ENCODE measurements at regions of chr18 and their contacts with region 1.

Region 1: DNA sequence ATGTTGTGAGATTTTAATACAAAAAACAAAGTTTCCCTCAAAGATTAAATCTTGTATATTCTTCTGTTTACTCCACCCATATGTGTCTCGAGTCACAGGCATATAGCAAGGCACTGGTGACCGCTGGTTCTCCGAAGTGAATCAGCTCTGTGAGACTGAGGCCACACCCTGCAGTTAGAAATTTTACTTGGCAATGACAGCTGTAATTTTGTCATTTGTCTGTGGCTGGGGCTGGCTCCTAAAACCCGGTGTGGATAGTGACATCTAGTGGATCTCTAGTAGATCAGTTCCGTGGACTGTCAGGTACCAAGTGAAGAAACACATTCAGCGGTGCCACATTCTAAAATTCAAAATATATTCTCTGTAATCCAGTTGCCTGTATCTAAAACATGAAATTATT is 278.0 kb downstream of the NEDD4L start:
- DNase-seq: peak; percentile 85
- H3K4me3 Mint-ChIP-seq: no peak overlapping the region
- H3K27ac Mint-ChIP-seq: no peak overlapping the region
- H3K4me1 Mint-ChIP-seq: peaks cover 4% of the 10 kb centered on the region
- H3K27me3 Mint-ChIP-seq: peaks cover 12% of the 10 kb centered on the region

Region 2: GRCh38 chr18:58180738-58181353 is 141.1 kb before region 1 on chr18:
- intact Hi-C with region 1: loop called (anchors 5 kb)
- DNase-seq: peak; percentile 82
- H3K4me3 Mint-ChIP-seq: no peak overlapping the region
- H3K27ac Mint-ChIP-seq: no peak overlapping the region
- H3K4me1 Mint-ChIP-seq: no peaks in the 10 kb centered on the region
- H3K27me3 Mint-ChIP-seq: peaks cover 10% of the 10 kb centered on the region

Region 3: GRCh38 chr18:58303363-58303762 is 18.6 kb before region 1 on chr18:
- intact Hi-C with region 1: loop called (anchors 1 kb)
- DNase-seq: peak; percentile 78
- H3K4me3 Mint-ChIP-seq: no peak overlapping the region
- H3K27ac Mint-ChIP-seq: no peak overlapping the region
- H3K4me1 Mint-ChIP-seq: peaks cover 12% of the 10 kb centered on the region
- H3K27me3 Mint-ChIP-seq: peaks cover 36% of the 10 kb centered on the region